ENCODE measurements at regions of chr9 and their contacts with region 1.

Region 1: GRCh38 chr9:92140074-92140753 is 25.0 kb upstream of the SPTLC1 start:
- DNase-seq: no peak
- H3K4me3 ChIP-seq: no peak overlapping the region
- H3K27me3 ChIP-seq: peaks cover 1% of the 10 kb centered on the region; the same call in 1 of the 2 replicates
- CTCF ChIP-seq: peak; percentile 96

Region 2: DNA sequence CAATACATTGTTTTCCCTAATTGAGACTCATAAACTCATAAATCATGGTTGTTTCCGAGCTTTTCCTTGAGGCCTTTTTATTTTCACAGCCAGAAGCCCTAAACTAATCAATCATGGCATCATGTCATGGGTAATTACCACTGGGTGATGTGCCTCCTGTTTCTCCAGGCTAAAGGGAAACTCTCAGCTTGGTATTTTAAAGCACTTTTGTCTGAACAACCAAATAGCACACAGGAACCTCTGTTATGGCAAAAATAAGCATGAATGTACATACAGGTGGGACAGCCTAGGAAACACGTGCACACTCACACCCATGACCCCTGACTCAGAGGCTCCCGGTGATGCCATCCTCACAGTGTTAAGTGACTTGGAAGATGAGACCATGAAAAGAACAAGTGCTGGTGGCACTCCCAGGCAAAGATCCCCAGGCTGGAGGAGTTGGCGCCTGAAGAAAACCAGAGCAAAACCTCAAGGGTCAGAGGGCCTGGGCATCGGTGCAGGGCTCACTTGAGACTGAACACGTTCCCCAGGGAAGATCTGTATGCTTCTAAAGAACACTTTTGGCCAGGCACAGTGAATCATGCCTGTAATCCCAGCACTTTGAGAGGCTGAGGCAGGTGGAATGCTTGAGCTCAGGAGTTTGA is 344.5 kb before region 1 on chr9:
- CTCF ChIA-PET with region 1: no interaction called
- POLR2A ChIA-PET with region 1: no interaction called
- DNase-seq: no peak
- H3K4me3 ChIP-seq: no peak overlapping the region
- H3K27me3 ChIP-seq: no peaks in the 10 kb centered on the region
- CTCF ChIP-seq: no peak

Region 3: GRCh38 chr9:92206488-92206887 is 66.3 kb after region 1 on chr9:
- CTCF ChIA-PET with region 1: interaction called, 52 read pairs
- POLR2A ChIA-PET with region 1: no interaction called
- DNase-seq: no peak
- H3K4me3 ChIP-seq: no peak overlapping the region
- H3K27me3 ChIP-seq: no peaks in the 10 kb centered on the region
- CTCF ChIP-seq: no peak

Region 4: DNA sequence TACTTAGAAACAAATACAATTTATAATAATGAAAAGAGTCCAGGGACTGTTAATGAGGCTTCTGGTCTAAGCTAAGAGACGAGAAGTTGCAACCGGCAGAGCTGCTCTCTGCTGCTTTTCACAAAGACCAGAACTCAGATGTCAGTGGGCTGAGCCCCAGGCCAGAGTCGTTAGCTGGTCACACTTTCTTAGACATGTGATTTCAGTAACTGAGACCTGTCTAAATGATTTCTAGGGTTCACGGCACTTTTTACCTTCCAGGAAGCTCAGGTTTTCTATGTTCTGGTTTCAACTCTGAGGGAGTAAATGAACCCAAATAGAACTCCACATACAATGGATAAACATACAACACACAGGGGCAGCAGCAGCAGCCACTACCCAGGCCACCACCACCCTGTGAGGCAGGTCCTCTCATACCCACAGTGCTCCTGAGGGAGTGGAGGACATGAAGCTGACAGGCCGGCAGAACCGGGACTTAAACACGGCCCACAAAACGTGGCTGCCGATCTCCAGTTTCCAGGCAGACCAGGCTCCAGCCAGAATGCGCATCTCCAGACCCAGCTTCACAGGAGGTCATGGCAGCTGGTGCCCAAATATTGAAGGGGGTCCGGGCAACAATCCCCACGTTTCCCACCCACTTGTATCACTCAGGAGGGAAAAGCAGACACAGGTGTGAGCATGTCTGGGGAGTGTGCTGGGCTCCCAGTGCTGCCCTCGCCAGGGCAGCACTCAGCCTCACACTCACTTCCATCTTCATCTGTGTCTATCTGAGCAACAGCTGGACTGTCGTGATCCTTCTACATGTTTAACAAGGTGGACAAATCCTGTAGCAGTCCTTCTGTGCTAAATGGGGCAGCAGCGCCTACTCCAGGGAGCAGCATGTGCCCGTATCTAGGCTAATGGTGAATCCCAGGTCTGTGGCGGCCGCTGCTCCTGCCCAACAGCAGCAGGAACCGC is 114.4 kb after region 1 on chr9:
- CTCF ChIA-PET with region 1: interaction called, 375 read pairs
- POLR2A ChIA-PET with region 1: no interaction called
- DNase-seq: no peak
- H3K4me3 ChIP-seq: no peak overlapping the region
- H3K27me3 ChIP-seq: no peaks in the 10 kb centered on the region
- CTCF ChIP-seq: no peak

Region 5: DNA sequence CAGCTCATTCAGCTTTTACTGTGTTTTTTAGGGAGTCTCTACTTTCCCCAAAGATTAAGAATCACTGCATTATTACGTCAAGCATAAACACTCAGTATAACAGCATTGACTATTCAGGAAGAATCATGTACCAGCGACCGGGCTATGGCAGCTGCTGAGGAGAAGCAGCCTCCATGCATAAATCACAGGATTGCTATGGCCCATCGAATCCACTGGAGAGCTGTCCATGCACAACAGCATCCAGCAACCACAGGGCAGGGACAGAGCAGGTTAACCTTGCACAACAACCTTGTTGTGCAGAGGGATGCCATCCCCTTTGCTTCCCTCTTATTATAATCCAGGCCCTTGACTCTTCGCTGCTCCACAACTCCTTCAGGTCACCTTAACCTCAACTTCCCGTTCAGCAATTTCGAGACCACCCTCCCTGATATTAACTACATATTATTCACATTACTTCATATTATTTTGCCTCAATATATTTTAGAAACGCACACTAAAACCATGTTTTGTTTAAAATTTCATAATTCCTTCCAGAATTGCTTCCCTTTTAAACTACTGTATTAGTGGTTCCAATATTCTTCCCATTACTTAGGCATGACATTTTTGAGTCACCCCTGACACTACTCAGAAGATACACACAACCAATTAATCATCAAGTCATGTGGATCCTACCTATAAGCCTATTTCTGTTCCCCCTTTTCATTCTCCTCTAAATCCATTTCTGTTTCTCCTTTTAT is 152.3 kb after region 1 on chr9:
- CTCF ChIA-PET with region 1: interaction called, 29 read pairs
- POLR2A ChIA-PET with region 1: no interaction called
- DNase-seq: no peak
- H3K4me3 ChIP-seq: peak overlapping the region; percentile 85
- H3K27me3 ChIP-seq: no peaks in the 10 kb centered on the region
- CTCF ChIP-seq: no peak

Region 6: GRCh38 chr9:92634712-92635605 is 494.7 kb after region 1 on chr9:
- CTCF ChIA-PET with region 1: interaction called, 18 read pairs
- POLR2A ChIA-PET with region 1: no interaction called
- DNase-seq: no peak
- H3K4me3 ChIP-seq: no peak overlapping the region
- H3K27me3 ChIP-seq: no peaks in the 10 kb centered on the region
- CTCF ChIP-seq: peak; percentile 97

Measured in BJ (cell line).